Naive thymus-derived CD4-positive, alpha-beta T cell (primary cell): ENCODE measurements at regions of chr15 and their contacts with region 1.

Region 1: GRCh38 chr15:88467073-88467934 is at the starts of genes MRPL46 and MRPS11:
- DNase-seq: peak; percentile 78 to 94 (median 91)
- ATAC-seq: peak; percentile 97
- H3K4me3 ChIP-seq: peak within 1 kb of the TSS; percentile 75
- H3K4me3 Mint-ChIP-seq: peak within 1 kb of the TSS; percentile 87 to 98 (median 97)
- H3K27ac ChIP-seq: peak within 1 kb of the TSS; percentile 95
- H3K27ac Mint-ChIP-seq: peak within 1 kb of the TSS; percentile 96 to 99 (median 98)
- H3K4me1 ChIP-seq: peaks cover 0 to 19% of the 10 kb centered on the region in 2 donors
- H3K4me1 Mint-ChIP-seq: peaks cover 18 to 42% (median 29%) of the 10 kb centered on the region in 7 donors
- H3K27me3 ChIP-seq: no peaks in the 10 kb centered on the region
- H3K27me3 Mint-ChIP-seq: no peaks in the 10 kb centered on the region
- total RNA-seq, gene MRPL46: 9.2 to 32.1 (median 28.5) TPM
- total RNA-seq, gene MRPS11: 12.8 to 55.7 (median 24.0) TPM

Region 2: DNA sequence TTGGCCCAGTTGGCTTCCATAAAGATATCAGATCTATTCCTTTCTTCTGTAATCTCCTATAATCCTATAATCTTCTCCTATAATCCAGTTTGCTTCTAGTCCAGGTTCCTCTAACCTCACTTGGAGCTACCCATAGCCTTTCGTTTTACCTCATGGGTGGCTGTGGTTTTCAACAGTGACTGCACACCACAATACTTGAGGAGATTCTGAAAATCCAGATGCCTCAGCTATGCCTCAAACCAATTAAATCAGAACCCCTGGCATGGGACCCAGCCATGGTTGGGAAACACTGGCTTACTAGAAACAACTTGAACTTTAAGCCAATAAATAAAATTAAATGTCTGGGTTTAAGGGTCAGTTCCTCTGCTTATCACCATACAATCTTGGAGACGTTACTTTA is 124.6 kb before region 1 on chr15:
- CTCF ChIA-PET with region 1: no interaction called
- POLR2A ChIA-PET with region 1: no interaction called
- intact Hi-C with region 1: no loop called
- DNase-seq: no peak
- ATAC-seq: no peak
- H3K4me3 ChIP-seq: no peak overlapping the region
- H3K4me3 Mint-ChIP-seq: no peak overlapping the region
- H3K27ac ChIP-seq: no peak overlapping the region
- H3K27ac Mint-ChIP-seq: no peak overlapping the region
- H3K4me1 ChIP-seq: no peaks in the 10 kb centered on the region
- H3K4me1 Mint-ChIP-seq: no peaks in the 10 kb centered on the region
- H3K27me3 ChIP-seq: no peaks in the 10 kb centered on the region
- H3K27me3 Mint-ChIP-seq: peaks cover 4 to 36% (median 19%) of the 10 kb centered on the region in 5 donors

Region 3: DNA sequence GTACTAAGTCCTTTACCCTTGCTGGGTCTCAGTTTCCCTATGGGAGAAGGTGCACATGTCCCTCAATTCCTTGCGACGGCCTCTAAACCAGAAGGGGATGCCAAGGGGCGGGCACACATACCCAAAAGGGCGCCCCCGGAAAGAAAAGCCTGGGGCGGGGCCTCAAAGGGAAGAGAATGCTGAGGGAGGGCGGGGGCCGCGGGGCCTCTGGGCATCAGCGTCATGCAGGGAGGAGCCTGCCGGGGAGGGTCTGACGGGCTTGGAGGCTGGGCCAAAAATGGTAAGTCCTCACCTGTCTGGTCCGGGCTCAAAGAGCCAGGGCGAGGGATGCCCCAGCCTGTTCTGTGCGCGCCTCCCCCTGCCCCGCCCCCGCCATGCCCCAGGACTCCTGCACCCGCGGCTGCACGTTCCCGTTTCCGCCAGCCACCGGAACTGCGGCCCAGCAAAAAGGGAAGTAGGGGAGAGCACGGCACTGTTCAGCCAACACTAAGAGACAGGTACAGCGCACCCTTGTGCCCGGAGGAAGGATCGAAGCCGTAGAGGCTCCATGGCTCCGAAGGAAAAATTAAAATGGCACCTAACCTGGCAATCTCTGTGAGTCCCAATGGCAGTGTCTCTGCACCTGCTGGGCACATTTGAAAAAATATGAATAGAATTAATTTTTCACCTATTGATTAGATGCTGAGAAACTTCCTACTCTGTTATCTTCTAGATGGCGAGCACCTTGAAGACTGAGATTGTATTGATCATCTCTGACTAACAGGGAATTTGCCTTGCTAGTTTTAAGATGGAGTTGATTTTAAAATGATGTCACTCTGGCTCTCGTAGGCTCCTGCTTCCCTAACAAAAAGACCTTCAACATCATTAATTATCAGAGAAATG is 79.2 kb after region 1 on chr15 and contains the start of gene DET1:
- CTCF ChIA-PET with region 1: no interaction called
- POLR2A ChIA-PET with region 1: no interaction called
- intact Hi-C with region 1: loop called in 1 of 2 experiments (anchors 1 kb)
- DNase-seq: peak; percentile 75 to 94 (median 92)
- ATAC-seq: peak; percentile 97
- H3K4me3 ChIP-seq: peak within 1 kb of the TSS; percentile 66
- H3K4me3 Mint-ChIP-seq: peak within 1 kb of the TSS; percentile 80 to 96 (median 90)
- H3K27ac ChIP-seq: peak within 1 kb of the TSS; percentile 81
- H3K27ac Mint-ChIP-seq: peak within 1 kb of the TSS; percentile 85 to 97 (median 92)
- H3K4me1 ChIP-seq: peaks cover 0 to 5% of the 10 kb centered on the region in 2 donors
- H3K4me1 Mint-ChIP-seq: peaks cover 9 to 24% (median 14%) of the 10 kb centered on the region in 7 donors
- H3K27me3 ChIP-seq: no peaks in the 10 kb centered on the region
- H3K27me3 Mint-ChIP-seq: no peaks in the 10 kb centered on the region
- total RNA-seq, gene DET1: 4.5 to 16.5 (median 8.4) TPM

Region 4: GRCh38 chr15:88649286-88649733 is 182.0 kb after region 1 on chr15:
- CTCF ChIA-PET with region 1: no interaction called
- POLR2A ChIA-PET with region 1: no interaction called
- intact Hi-C with region 1: no loop called
- DNase-seq: peak in 8 of 9 donors; percentile 44 to 70 (median 60)
- ATAC-seq: peak; percentile 85
- H3K4me3 ChIP-seq: peak overlapping the region; percentile 23
- H3K4me3 Mint-ChIP-seq: peak overlapping the region; percentile 73 to 94 (median 83)
- H3K27ac ChIP-seq: peak overlapping the region; percentile 76
- H3K27ac Mint-ChIP-seq: peak overlapping the region; percentile 92 to 99 (median 97)
- H3K4me1 ChIP-seq: peaks cover 34 to 80% of the 10 kb centered on the region in 2 donors
- H3K4me1 Mint-ChIP-seq: peaks cover 54 to 96% (median 88%) of the 10 kb centered on the region in 7 donors
- H3K27me3 ChIP-seq: no peaks in the 10 kb centered on the region
- H3K27me3 Mint-ChIP-seq: no peaks in the 10 kb centered on the region

Region 5: DNA sequence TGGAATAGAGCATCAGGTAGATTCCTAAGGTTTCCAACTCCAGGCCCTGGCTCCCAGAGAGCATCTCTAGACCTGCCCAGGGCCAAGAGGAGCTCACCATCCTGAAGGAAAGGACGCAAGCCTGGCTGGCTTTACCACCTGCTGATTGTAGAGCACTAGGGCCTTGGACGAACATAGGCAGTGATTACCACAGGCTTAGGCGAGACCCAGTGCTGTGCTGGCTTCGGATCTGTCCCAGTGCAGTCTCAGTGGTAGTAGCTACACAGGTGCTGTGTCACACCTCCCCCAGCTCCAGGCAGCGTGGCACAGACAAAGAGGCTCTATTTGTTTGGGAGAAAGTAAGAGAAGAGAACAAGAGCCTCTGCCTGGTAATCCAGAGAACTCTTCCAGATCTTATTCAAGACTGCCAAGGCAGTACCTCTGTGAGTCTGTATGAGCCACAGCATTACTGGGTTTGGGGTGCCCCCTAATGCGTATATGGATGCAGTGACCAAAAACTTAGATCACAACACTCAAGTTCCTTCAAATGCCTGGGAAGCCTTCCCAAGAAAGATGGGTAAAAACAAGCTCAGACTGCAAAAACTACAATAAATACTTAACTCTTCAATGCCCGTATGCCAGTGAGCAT is 197.0 kb after region 1 on chr15:
- CTCF ChIA-PET with region 1: interaction called, 5 read pairs
- POLR2A ChIA-PET with region 1: interaction called, 7 read pairs
- intact Hi-C with region 1: loop called in 1 of 2 experiments (anchors 2 kb)
- DNase-seq: peak in 7 of 9 donors; percentile 60 to 75 (median 67)
- ATAC-seq: peak; percentile 84
- H3K4me3 ChIP-seq: no peak overlapping the region
- H3K4me3 Mint-ChIP-seq: no peak overlapping the region
- H3K27ac ChIP-seq: no peak overlapping the region
- H3K27ac Mint-ChIP-seq: peak overlapping the region in 8 of 9 donors; percentile 52 to 84 (median 66)
- H3K4me1 ChIP-seq: peaks cover 0 to 34% of the 10 kb centered on the region in 2 donors
- H3K4me1 Mint-ChIP-seq: peaks cover 6 to 52% (median 32%) of the 10 kb centered on the region in 7 donors
- H3K27me3 ChIP-seq: no peaks in the 10 kb centered on the region
- H3K27me3 Mint-ChIP-seq: peaks cover 0 to 10% (median 8%) of the 10 kb centered on the region in 5 donors

Region 6: GRCh38 chr15:89087830-89088604 is 620.7 kb after region 1 on chr15 and contains the start of gene ABHD2:
- CTCF ChIA-PET with region 1: no interaction called
- POLR2A ChIA-PET with region 1: no interaction called
- intact Hi-C with region 1: loop called (anchors 1 to 5 kb)
- DNase-seq: peak; percentile 93 to 99 (median 97)
- ATAC-seq: peak; percentile 97
- H3K4me3 ChIP-seq: peak within 1 kb of the TSS; percentile 78
- H3K4me3 Mint-ChIP-seq: peak within 1 kb of the TSS in 1 of 10 donors; percentile 8
- H3K27ac ChIP-seq: peak within 1 kb of the TSS; percentile 81
- H3K27ac Mint-ChIP-seq: peak within 1 kb of the TSS in 7 of 9 donors; percentile 90 to 100 (median 97)
- H3K4me1 ChIP-seq: peaks cover 26 to 29% of the 10 kb centered on the region in 2 donors
- H3K4me1 Mint-ChIP-seq: peaks cover 30 to 43% (median 32%) of the 10 kb centered on the region in 7 donors
- H3K27me3 ChIP-seq: no peaks in the 10 kb centered on the region
- H3K27me3 Mint-ChIP-seq: no peaks in the 10 kb centered on the region
- total RNA-seq, gene ABHD2: 43.6 to 85.0 (median 67.7) TPM

Region 7: GRCh38 chr15:89575146-89575655 is 1107.9 kb after region 1 on chr15 and contains the start of gene TICRR:
- CTCF ChIA-PET with region 1: no interaction called
- POLR2A ChIA-PET with region 1: no interaction called
- intact Hi-C with region 1: loop called in 1 of 2 experiments (anchors 5 kb)
- DNase-seq: peak; percentile 69 to 98 (median 97)
- ATAC-seq: peak; percentile 99
- H3K4me3 ChIP-seq: peak within 1 kb of the TSS; percentile 86
- H3K4me3 Mint-ChIP-seq: peak within 1 kb of the TSS; percentile 77 to 96 (median 86)
- H3K27ac ChIP-seq: peak within 1 kb of the TSS; percentile 34
- H3K27ac Mint-ChIP-seq: peak within 1 kb of the TSS; percentile 52 to 87 (median 74)
- H3K4me1 ChIP-seq: no peaks in the 10 kb centered on the region
- H3K4me1 Mint-ChIP-seq: peaks cover 0 to 38% (median 8%) of the 10 kb centered on the region in 7 donors
- H3K27me3 ChIP-seq: no peaks in the 10 kb centered on the region
- H3K27me3 Mint-ChIP-seq: peaks cover 9 to 25% (median 13%) of the 10 kb centered on the region in 5 donors
- total RNA-seq, gene TICRR: 0.11 to 15.5 (median 0.19) TPM